ENCODE measurements at regions of chr6 and their contacts with region 1.

Region 1: DNA sequence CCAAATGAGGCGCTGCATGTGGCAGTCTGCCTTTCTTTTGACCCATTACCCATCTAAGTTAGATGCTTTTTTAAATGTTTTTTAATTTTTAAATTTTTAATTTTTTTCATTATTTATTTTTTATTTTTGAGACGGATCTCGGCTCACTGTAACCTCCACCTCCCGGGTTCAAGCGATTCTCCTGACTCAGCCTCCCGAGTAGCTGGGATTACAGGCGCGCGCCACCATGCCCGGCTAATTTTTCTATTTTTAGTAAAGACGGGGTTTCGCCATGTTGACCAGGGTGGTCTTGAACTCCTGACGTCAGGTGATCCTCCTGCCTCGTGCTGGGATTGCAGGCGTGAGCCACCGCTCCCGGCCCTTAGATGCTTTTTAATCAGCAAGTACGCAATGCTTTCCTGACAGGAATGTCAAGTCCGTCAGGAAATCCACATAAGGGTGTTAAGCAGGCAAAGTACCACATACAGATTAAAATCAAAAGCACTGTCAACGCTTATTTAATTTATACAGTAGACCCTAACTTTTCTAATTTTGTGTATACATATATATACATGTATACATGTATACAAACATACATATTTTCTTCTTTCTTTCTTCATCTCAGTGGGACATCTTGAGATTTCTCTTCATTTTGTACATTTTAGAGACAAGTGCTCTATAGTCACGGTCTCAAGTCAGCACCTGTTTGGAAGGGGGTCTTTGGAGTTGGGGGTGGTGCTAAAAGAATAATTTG is 995 bp upstream of the GSTA4 start:
- DNase-seq: peak in 1 of 2 donors; percentile 34
- ATAC-seq: peak in 1 of 2 donors; percentile 4
- H3K4me3 ChIP-seq: peak overlapping the region; percentile 48 to 87 (median 70)
- H3K27ac ChIP-seq: peak overlapping the region; percentile 85 to 93 (median 92)
- H3K4me1 ChIP-seq: peaks cover 10 to 16% of the 10 kb centered on the region in 2 donors
- H3K27me3 ChIP-seq: no peaks in the 10 kb centered on the region
- CTCF ChIP-seq: no peak
- POLR2A ChIP-seq: no peak

Region 2: DNA sequence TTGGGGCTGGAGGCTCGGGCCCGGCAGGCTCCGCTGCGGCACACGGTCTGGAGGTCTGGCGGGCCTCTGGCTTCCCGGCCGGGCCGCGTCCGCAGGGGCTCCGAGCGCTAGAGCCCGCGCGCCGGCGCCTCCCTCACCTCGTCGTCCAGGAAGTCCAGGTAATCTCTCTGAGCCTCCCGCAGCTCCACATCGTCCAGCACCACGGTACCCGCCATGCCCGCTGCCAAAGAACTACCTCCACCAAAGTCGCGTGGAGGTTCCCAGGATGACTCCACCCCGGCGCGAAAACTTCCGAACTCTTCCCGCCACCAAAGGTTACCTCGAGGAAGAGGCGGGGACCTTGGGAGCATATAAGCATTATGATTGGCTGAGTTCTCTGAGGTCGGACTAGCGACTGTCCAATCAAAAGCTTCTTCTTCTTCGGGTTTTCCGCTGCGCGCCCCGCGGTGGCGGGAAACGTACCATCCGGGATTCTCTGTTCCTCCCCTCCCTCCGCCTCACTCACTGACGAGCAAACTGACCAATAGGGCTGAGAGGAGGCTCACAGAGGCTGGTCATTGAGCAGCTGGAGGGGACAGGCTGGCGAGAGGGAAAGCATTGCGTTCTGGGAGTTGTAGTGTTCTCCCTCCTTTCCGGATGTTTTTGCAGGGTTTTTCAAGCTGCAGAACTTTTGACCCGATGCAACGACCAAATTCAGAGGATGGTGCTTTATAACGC is 711.5 kb before region 1 on chr6 and contains the start of gene MCM3:
- in situ Hi-C with region 1: no loop called
- intact Hi-C with region 1: loop called (anchors 10 kb)
- DNase-seq: peak; percentile 96 to 98
- ATAC-seq: peak; percentile 100
- H3K4me3 ChIP-seq: peak within 1 kb of the TSS; percentile 75 to 91 (median 82)
- H3K27ac ChIP-seq: peak within 1 kb of the TSS; percentile 55 to 76 (median 70)
- H3K4me1 ChIP-seq: peaks cover 15 to 18% of the 10 kb centered on the region in 2 donors
- H3K27me3 ChIP-seq: no peaks in the 10 kb centered on the region
- CTCF ChIP-seq: peak in 1 of 5 experiments; percentile 23
- POLR2A ChIP-seq: no peak
- total RNA-seq, gene MCM3: 9.1 to 12.9 (median 9.8) TPM

Region 3: GRCh38 chr6:52517502-52518278 is 478.4 kb before region 1 on chr6:
- in situ Hi-C with region 1: no loop called
- intact Hi-C with region 1: loop called (anchors 10 kb)
- DNase-seq: peak; percentile 89 to 91
- ATAC-seq: peak; percentile 99
- H3K4me3 ChIP-seq: no peak overlapping the region
- H3K27ac ChIP-seq: peak overlapping the region; percentile 72 to 82 (median 80)
- H3K4me1 ChIP-seq: peaks cover 27 to 36% of the 10 kb centered on the region in 2 donors
- H3K27me3 ChIP-seq: no peaks in the 10 kb centered on the region
- CTCF ChIP-seq: no peak
- POLR2A ChIP-seq: peak; percentile 16 to 54

Region 4: GRCh38 chr6:53359072-53359842 is 363.2 kb after region 1 on chr6:
- in situ Hi-C with region 1: no loop called
- intact Hi-C with region 1: loop called (anchors 10 kb)
- DNase-seq: peak; percentile 85 to 87
- ATAC-seq: peak; percentile 90 to 95
- H3K4me3 ChIP-seq: peak overlapping the region; percentile 63 to 74 (median 66)
- H3K27ac ChIP-seq: peak overlapping the region; percentile 75 to 87 (median 80)
- H3K4me1 ChIP-seq: peaks cover 0 to 4% of the 10 kb centered on the region in 2 donors
- H3K27me3 ChIP-seq: no peaks in the 10 kb centered on the region
- CTCF ChIP-seq: no peak
- POLR2A ChIP-seq: peak; percentile 51 to 83

Region 5: DNA sequence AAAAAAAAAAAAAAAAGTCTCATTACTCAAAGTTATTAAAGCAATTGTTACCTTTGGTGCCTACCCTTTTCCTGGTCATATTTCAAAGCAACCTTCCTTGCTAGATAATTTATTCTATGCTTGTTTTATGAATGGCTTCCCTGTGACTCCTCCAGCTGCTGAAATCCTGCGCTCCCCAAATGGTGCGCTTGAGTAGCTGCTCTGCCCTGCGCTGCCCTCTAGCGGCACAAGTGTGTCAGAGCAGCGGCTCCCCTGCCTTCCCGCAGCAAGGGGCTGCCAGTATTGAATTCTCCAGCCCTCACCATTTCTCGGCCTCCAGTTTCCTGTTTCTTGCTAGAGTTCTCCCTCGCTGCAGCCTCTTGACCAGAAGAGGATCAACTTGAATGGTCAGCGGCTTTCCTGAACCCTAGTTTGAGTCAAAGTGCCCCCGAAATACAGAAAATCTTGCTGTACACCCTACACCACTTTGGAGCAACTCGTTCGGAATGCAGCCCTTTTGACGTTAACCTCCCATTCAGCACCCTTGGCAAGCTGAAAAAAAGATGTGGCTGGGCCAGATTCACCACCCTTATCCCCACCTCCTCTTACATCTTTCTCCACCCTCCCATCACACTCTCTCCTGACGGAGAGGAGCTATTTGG is 729.8 kb after region 1 on chr6:
- in situ Hi-C with region 1: no loop called
- intact Hi-C with region 1: loop called (anchors 10 kb)
- DNase-seq: peak; percentile 54 to 64
- ATAC-seq: peak; percentile 86 to 90
- H3K4me3 ChIP-seq: no peak overlapping the region
- H3K27ac ChIP-seq: no peak overlapping the region
- H3K4me1 ChIP-seq: no peaks in the 10 kb centered on the region
- H3K27me3 ChIP-seq: no peaks in the 10 kb centered on the region
- CTCF ChIP-seq: peak; percentile 83 to 99 (median 89)
- POLR2A ChIP-seq: no peak

Region 6: GRCh38 chr6:54255886-54256285 is 1259.8 kb after region 1 on chr6:
- in situ Hi-C with region 1: no loop called
- intact Hi-C with region 1: no loop called
- DNase-seq: no peak
- ATAC-seq: peak; percentile 93 to 94
- H3K4me3 ChIP-seq: no peak overlapping the region
- H3K27ac ChIP-seq: peak overlapping the region; percentile 60 to 82 (median 66)
- H3K4me1 ChIP-seq: peaks cover 48 to 71% of the 10 kb centered on the region in 2 donors
- H3K27me3 ChIP-seq: no peaks in the 10 kb centered on the region
- CTCF ChIP-seq: no peak
- POLR2A ChIP-seq: no peak

Measured in gastrocnemius medialis (tissue), 4 donors.